ENCODE measurements at regions of chr7 and their contacts with region 1.

Region 1: GRCh38 chr7:116630932-116631745 is 40.9 kb upstream of the MET start:
- DNase-seq: peak; percentile 97
- H3K4me3 Mint-ChIP-seq: peak overlapping the region; percentile 62
- H3K27ac Mint-ChIP-seq: peak overlapping the region; percentile 94
- H3K4me1 Mint-ChIP-seq: peaks cover 48% of the 10 kb centered on the region
- H3K27me3 Mint-ChIP-seq: no peaks in the 10 kb centered on the region
- CTCF ChIP-seq: no peak

Region 2: DNA sequence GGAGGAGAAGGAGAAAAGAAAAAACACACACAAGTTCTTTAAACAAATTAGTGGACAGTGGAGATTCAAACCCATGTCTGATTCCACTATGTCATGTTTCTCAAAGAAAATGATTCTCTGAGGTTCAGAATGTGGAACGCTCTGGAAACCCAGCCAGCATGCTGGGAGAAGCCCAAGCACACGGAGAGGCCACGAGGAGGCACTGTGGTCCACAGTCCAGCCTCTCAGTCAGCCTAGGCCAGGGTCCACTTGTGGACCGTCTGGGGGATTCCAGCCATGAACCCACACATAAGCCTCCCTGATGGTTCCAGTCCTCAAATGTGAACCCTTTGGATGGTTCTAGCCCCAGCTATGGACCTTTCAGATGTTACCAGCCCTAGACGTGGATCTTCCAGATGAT is 32.9 kb before region 1 on chr7:
- CTCF ChIA-PET with region 1: interaction called, 104 read pairs
- POLR2A ChIA-PET with region 1: interaction called, 37 read pairs
- intact Hi-C with region 1: no loop called
- DNase-seq: peak; percentile 56
- H3K4me3 Mint-ChIP-seq: no peak overlapping the region
- H3K27ac Mint-ChIP-seq: no peak overlapping the region
- H3K4me1 Mint-ChIP-seq: no peaks in the 10 kb centered on the region
- H3K27me3 Mint-ChIP-seq: no peaks in the 10 kb centered on the region
- CTCF ChIP-seq: peak; percentile 75

Region 3: GRCh38 chr7:116687801-116688201 is 56.7 kb after region 1 on chr7:
- CTCF ChIA-PET with region 1: interaction called, 3 read pairs
- POLR2A ChIA-PET with region 1: interaction called, 38 read pairs
- intact Hi-C with region 1: no loop called
- DNase-seq: peak; percentile 76
- H3K4me3 Mint-ChIP-seq: peak overlapping the region; percentile 52
- H3K27ac Mint-ChIP-seq: peak overlapping the region; percentile 44
- H3K4me1 Mint-ChIP-seq: peaks cover 66% of the 10 kb centered on the region
- H3K27me3 Mint-ChIP-seq: no peaks in the 10 kb centered on the region
- CTCF ChIP-seq: no peak

Region 4: DNA sequence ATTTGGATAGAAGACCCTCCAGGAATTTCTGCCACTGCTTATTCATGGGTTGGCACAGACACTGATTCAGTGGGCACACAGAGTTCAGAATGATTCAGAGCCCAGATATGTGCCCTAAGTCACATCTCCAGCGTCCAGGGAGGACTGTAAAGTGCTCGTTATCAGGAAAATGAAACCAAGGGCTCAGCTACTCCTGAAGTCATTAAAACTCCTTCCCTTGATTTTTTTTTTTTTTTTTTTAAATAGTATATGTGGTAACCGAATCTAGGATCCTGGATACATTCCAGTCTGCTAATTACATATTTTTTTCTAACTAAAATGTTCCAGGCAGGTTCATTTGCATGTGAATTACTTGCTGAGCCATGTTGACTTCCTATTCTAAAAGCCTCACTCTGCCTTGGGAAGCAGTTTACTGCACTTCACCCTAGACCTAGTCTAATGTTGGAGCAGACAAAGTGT is 75.6 kb after region 1 on chr7:
- CTCF ChIA-PET with region 1: interaction called, 4 read pairs
- POLR2A ChIA-PET with region 1: interaction called, 14 read pairs
- intact Hi-C with region 1: no loop called
- DNase-seq: peak; percentile 71
- H3K4me3 Mint-ChIP-seq: peak overlapping the region; percentile 68
- H3K27ac Mint-ChIP-seq: peak overlapping the region; percentile 89
- H3K4me1 Mint-ChIP-seq: peaks cover 59% of the 10 kb centered on the region
- H3K27me3 Mint-ChIP-seq: no peaks in the 10 kb centered on the region
- CTCF ChIP-seq: no peak

Region 5: GRCh38 chr7:116809636-116810266 is 178.6 kb after region 1 on chr7:
- CTCF ChIA-PET with region 1: interaction called, 3 read pairs
- POLR2A ChIA-PET with region 1: interaction called, 14 read pairs
- intact Hi-C with region 1: no loop called
- DNase-seq: peak; percentile 77
- H3K4me3 Mint-ChIP-seq: no peak overlapping the region
- H3K27ac Mint-ChIP-seq: peak overlapping the region; percentile 75
- H3K4me1 Mint-ChIP-seq: peaks cover 19% of the 10 kb centered on the region
- H3K27me3 Mint-ChIP-seq: no peaks in the 10 kb centered on the region
- CTCF ChIP-seq: peak; percentile 64